GM10248 (cell line): ENCODE measurements at regions of chr14 and their contacts with region 1.

Region 1: DNA sequence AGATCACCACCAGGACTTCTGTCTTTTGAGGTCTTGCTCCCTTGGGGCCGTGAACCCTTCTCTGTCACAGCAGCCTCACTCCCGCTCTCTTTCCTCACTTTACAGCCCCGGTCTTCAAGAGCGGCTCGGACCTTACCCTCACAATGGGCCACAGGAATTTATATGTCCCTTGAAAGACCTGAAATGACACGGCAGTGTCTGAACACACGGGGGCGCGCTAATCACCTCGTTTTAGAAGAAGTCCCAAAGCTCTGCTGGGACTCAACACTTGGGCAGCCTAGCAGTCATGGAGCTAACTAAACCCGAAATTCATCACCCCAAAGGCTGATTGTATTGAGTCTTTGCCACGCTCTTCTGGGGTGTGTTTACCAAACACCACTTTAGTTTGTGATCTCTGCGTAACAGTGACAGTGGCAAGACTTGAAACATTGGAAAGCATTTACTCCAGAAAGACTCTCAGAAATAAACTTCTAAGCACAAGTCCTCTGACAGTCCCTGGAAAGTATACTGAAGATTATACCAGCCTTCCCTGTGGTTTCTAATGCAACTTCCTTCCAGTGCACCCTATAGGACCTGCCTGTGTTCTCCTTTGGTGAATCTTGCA is 29.0 kb downstream of the SERPINA11 start:
- DNase-seq: peak; percentile 52
- CTCF ChIP-seq: peak; percentile 76

Region 2: DNA sequence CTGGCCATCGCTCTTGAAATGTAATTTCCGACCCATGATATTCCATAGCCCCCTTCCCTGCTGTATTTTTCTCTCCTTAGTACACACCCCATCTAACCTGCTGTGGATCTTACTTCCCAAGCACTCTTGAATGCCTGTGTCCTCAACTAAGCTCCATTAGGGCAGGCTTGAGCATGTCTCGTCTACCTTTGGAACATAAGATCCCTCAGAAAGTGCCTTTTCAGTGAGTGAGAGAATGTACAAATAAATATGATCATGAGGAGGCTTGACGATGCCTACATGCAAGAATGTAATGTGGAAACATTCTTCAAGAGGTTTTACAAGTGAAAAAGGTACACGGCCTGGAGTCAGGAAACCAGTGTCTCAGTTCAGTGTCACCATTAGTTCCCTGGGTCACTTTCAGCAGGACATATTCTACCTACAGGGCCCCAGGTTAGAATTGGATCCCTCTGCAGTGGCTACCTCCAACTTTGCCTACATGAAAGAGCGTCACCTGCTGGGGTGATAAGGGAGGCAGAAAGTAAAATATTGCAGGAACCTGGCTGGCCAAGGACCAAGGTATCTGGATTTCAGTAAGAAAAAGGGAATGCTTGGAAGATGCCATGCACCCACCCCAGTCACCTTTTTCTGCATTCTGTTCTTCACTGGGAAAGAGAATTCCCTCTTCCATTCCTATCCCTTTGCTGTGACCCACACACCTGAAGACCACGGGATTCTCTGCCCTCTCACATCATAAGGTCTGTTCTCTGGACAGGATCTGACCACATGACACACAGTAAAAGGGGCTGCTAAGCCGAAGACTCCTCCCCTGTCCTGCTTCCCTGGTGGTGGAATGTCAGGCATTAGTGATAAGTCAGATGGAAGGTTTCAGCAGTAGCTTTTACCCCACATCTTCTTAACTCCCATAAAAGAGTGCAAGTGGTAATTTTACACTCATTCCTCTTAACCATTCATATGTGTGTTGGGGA is 10.6 kb before region 1 on chr14:
- CTCF ChIA-PET with region 1: interaction called, 15 read pairs
- POLR2A ChIA-PET with region 1: no interaction called
- DNase-seq: no peak
- CTCF ChIP-seq: peak; percentile 19

Region 3: DNA sequence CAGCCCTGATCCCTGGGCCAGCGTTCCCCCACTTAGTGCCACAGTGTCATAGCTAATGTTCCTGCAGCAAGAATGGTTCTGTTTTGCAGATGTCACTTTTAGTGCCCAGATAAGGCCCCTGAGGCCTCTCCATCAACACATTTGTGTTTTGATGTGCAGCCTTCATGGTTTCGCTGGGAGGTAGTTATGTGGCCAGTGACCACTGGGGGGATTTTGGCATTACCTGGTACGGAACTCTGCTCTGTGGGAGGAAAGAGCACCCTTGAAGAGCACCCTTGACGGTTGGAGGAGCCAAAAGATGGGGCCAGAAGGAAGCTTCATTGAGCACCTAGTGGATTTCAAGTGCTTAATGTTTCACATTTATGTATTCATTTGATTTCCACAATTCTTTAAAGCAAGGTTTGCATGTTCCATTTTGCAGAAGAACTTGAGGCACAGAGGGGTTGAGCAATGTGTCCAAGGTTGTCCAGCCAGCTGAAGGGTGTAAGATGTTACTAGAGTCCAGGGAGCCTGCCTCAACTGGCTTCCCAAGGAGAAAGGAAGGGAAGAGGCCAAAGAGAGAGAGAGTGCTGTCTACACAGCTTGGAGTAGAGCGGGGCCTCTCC is 16.0 kb after region 1 on chr14:
- CTCF ChIA-PET with region 1: interaction called, 12 read pairs
- POLR2A ChIA-PET with region 1: no interaction called
- DNase-seq: no peak
- CTCF ChIP-seq: no peak

Region 4: GRCh38 chr14:94532447-94532846 is 108.9 kb after region 1 on chr14:
- CTCF ChIA-PET with region 1: no interaction called
- POLR2A ChIA-PET with region 1: no interaction called
- DNase-seq: no peak
- CTCF ChIP-seq: no peak